Breast epithelium (tissue), 4 donors: ENCODE measurements at regions of chrX and their contacts with region 1.

Region 1: GRCh38 chrX:15438332-15438731 is 54.1 kb upstream of the VEGFD start:
- DNase-seq: no peak
- H3K4me3 ChIP-seq: no peak overlapping the region
- H3K27ac ChIP-seq: no peak overlapping the region
- H3K4me1 ChIP-seq: no peaks in the 10 kb centered on the region
- H3K27me3 ChIP-seq: peaks cover 0 to 35% of the 10 kb centered on the region in 2 donors
- CTCF ChIP-seq: no peak
- POLR2A ChIP-seq: no peak

Region 2: GRCh38 chrX:15373976-15374375 is 64.4 kb before region 1 on chrX:
- intact Hi-C with region 1: loop called (anchors 2 kb)
- DNase-seq: no peak
- H3K4me3 ChIP-seq: no peak overlapping the region
- H3K27ac ChIP-seq: no peak overlapping the region
- H3K4me1 ChIP-seq: no peaks in the 10 kb centered on the region
- H3K27me3 ChIP-seq: peaks cover 0 to 48% of the 10 kb centered on the region in 2 donors
- CTCF ChIP-seq: no peak
- POLR2A ChIP-seq: no peak